CD8-positive, alpha-beta memory T cell (primary cell): ENCODE measurements at regions of chr5 and their contacts with region 1.

Region 1: GRCh38 chr5:176530983-176531821 is 6.0 kb downstream of the RNF44 start:
- DNase-seq: no peak
- H3K4me3 ChIP-seq: peak overlapping the region; percentile 34
- H3K4me3 Mint-ChIP-seq: peak overlapping the region; percentile 74 to 86 (median 82)
- H3K27ac ChIP-seq: no peak overlapping the region
- H3K27ac Mint-ChIP-seq: peak overlapping the region; percentile 86 to 99 (median 90)
- H3K4me1 ChIP-seq: peaks cover 64% of the 10 kb centered on the region
- H3K4me1 Mint-ChIP-seq: peaks cover 43 to 69% (median 46%) of the 10 kb centered on the region in 3 donors
- H3K27me3 ChIP-seq: no peaks in the 10 kb centered on the region
- H3K27me3 Mint-ChIP-seq: peaks cover 0 to 5% of the 10 kb centered on the region in 2 donors

Region 2: GRCh38 chr5:176543428-176544173 is 12.4 kb after region 1 on chr5:
- CTCF ChIA-PET with region 1: interaction called, 90 read pairs
- POLR2A ChIA-PET with region 1: interaction called, 51 read pairs
- DNase-seq: peak; percentile 60 to 82 (median 74)
- H3K4me3 ChIP-seq: peak overlapping the region; percentile 92
- H3K4me3 Mint-ChIP-seq: peak overlapping the region; percentile 92 to 97 (median 93)
- H3K27ac ChIP-seq: peak overlapping the region; percentile 85
- H3K27ac Mint-ChIP-seq: peak overlapping the region; percentile 96 to 99 (median 98)
- H3K4me1 ChIP-seq: peaks cover 69% of the 10 kb centered on the region
- H3K4me1 Mint-ChIP-seq: peaks cover 65 to 82% (median 74%) of the 10 kb centered on the region in 3 donors
- H3K27me3 ChIP-seq: no peaks in the 10 kb centered on the region
- H3K27me3 Mint-ChIP-seq: peaks cover 0 to 1% of the 10 kb centered on the region in 2 donors

Region 3: GRCh38 chr5:176619203-176619568 is 88.0 kb after region 1 on chr5:
- CTCF ChIA-PET with region 1: no interaction called
- POLR2A ChIA-PET with region 1: no interaction called
- DNase-seq: peak; percentile 73 to 82 (median 74)
- H3K4me3 ChIP-seq: no peak overlapping the region
- H3K4me3 Mint-ChIP-seq: peak overlapping the region in 5 of 7 donors; percentile 16 to 71 (median 60)
- H3K27ac ChIP-seq: no peak overlapping the region
- H3K27ac Mint-ChIP-seq: no peak overlapping the region
- H3K4me1 ChIP-seq: peaks cover 11% of the 10 kb centered on the region
- H3K4me1 Mint-ChIP-seq: peaks cover 10 to 22% (median 12%) of the 10 kb centered on the region in 3 donors
- H3K27me3 ChIP-seq: peaks cover 35% of the 10 kb centered on the region
- H3K27me3 Mint-ChIP-seq: peaks cover 43 to 74% of the 10 kb centered on the region in 2 donors

Region 4: GRCh38 chr5:176714067-176714466 is 182.9 kb after region 1 on chr5:
- CTCF ChIA-PET with region 1: no interaction called
- POLR2A ChIA-PET with region 1: no interaction called
- DNase-seq: no peak
- H3K4me3 ChIP-seq: no peak overlapping the region
- H3K4me3 Mint-ChIP-seq: no peak overlapping the region
- H3K27ac ChIP-seq: no peak overlapping the region
- H3K27ac Mint-ChIP-seq: no peak overlapping the region
- H3K4me1 ChIP-seq: no peaks in the 10 kb centered on the region
- H3K4me1 Mint-ChIP-seq: no peaks in the 10 kb centered on the region
- H3K27me3 ChIP-seq: no peaks in the 10 kb centered on the region
- H3K27me3 Mint-ChIP-seq: peaks cover 38 to 73% of the 10 kb centered on the region in 2 donors

Region 5: DNA sequence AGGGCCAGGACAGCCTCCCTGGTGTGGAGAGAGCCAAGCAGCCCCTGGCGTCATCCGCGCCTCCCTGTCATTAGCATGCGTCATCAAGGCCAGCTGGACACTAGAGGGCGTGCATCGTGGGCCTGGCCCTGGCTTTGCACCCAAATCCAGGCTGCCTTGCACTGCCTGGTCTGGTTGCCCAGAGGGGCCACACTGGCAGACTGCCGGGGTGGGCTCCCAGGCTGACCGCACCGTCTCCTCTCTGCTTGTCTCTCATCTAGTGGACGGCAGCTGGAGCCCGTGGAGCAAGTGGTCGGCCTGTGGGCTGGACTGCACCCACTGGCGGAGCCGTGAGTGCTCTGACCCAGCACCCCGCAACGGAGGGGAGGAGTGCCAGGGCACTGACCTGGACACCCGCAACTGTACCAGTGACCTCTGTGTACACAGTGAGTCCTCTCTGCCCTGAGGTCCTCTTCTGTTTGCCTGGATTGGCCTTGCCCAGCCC is 338.9 kb after region 1 on chr5:
- CTCF ChIA-PET with region 1: no interaction called
- POLR2A ChIA-PET with region 1: no interaction called
- DNase-seq: no peak
- H3K4me3 ChIP-seq: no peak overlapping the region
- H3K4me3 Mint-ChIP-seq: no peak overlapping the region
- H3K27ac ChIP-seq: no peak overlapping the region
- H3K27ac Mint-ChIP-seq: no peak overlapping the region
- H3K4me1 ChIP-seq: no peaks in the 10 kb centered on the region
- H3K4me1 Mint-ChIP-seq: peaks cover 7 to 15% (median 8%) of the 10 kb centered on the region in 3 donors
- H3K27me3 ChIP-seq: peaks cover 11% of the 10 kb centered on the region
- H3K27me3 Mint-ChIP-seq: peaks cover 19 to 24% of the 10 kb centered on the region in 2 donors